GM10248 (cell line): ENCODE measurements at regions of chr17 and their contacts with region 1.

Region 1: DNA sequence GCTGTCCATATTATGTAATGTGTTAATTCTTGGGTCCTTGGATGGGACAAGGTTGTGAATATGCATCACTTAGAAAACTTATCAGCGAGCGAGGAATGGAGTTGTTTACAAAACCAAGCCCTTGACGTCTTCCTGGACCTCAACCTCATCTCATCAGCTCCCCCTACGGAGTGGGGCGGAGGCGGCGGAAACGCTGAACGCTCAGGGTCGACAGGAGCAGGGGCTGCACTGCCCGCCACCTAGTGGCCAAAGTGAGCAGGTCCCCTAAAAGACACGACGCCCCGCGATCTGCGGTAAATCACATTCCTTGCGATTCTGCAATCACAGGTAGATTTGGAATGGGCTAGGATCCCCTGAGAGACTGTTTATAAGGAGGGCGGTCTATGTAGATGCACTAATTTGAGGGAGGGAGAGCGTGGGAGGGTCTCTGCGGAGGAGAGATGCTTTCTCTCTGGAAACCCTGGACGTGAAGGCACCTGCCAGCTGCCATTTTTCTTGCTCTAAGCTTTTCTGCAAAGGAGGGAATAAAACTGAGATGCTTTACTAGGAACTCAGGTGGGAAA is 5.4 kb upstream of the ICAM2 start:
- DNase-seq: peak; percentile 80
- CTCF ChIP-seq: peak; percentile 98

Region 2: GRCh38 chr17:63919311-63919723 is 106.5 kb before region 1 on chr17:
- CTCF ChIA-PET with region 1: interaction called, 160 read pairs
- POLR2A ChIA-PET with region 1: no interaction called
- DNase-seq: peak; percentile 85
- CTCF ChIP-seq: peak; percentile 89

Region 3: DNA sequence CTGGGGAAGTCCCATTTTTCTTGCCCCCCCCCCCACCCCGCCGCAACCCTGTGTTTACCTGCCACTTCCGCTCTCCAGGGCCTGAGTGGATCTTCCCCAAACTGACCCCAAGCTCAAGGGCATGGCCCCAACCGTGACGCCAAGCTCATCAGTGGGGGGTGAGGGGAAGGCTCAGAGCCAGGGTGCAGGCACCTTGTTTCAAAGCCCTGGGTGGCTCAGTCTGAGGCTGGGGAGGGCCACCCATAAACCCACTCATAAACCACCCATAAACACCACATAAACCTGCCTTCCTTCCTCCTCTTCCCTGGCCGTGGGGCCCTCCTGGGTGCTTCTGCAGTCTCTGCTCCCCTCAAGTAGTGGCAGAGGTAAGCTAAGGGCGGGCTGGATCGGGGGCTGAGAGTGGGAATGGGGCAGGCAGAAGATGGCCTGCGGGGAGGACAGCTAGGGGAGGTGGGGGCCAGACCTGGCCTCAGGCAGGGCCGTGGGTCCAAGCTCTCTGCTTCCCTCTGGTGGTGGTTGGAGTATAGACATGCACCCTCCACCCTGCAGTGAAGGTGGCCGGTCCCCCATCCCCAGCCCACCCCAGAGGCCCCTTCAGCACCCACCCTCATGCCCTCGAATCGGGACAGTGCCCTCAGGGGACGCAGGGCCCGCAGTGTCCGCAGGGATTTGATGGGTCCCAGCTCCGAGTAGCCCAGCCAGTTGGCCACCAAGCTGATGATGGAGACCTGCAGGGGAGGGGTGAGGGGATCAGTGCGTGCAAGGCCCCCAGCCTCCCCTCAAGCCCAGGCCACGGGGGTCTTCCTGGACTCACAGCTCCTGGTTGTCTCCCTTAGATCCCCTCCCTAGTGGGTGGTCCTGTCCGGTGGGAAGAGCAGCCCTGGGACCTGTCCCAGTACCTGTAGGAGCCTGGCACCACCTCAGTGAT is 79.1 kb before region 1 on chr17:
- CTCF ChIA-PET with region 1: interaction called, 22 read pairs
- POLR2A ChIA-PET with region 1: no interaction called
- DNase-seq: peak; percentile 90
- CTCF ChIP-seq: peak; percentile 79

Region 4: DNA sequence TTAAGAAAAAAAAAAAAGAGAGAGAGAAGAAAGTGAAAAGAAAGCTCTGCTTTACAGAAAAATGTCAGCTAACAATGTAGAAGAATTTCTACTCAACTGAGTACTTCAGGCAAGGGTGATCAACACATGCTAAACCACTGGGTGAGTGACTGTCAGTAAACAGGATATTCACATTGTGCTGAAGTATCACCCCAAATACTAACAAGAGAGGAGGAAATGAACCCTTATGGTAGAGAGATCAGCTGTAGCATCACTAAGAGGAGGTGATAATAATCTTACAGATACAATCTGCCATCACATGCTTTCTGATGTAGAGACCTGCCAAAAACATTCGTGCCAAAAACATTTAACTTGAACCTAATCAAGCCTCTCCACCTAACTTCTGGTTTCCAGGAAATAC is 25.3 kb after region 1 on chr17:
- CTCF ChIA-PET with region 1: interaction called, 169 read pairs
- POLR2A ChIA-PET with region 1: no interaction called
- DNase-seq: no peak
- CTCF ChIP-seq: no peak

Region 5: GRCh38 chr17:64073771-64074703 is 48.2 kb after region 1 on chr17:
- CTCF ChIA-PET with region 1: interaction called, 27 read pairs
- POLR2A ChIA-PET with region 1: no interaction called
- DNase-seq: peak; percentile 71
- CTCF ChIP-seq: no peak

Region 6: DNA sequence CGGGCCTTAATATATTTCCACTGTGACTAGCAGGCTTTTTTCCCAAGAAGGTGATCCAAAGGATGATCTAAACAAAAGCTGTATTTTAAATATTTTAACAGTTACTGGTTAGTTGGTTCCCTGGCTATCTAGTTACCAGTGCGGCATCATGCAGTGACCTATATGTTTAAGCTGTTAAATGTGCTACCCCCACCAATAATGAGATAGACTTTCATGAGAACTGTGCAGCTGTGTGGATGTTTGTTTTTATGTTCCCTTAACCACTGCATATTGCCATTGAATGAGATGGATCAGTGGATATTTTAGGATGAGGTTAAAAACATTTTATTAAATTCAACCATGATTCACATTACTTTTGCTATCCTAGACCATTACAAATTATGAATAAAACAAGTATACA is 87.2 kb after region 1 on chr17:
- CTCF ChIA-PET with region 1: interaction called, 515 read pairs
- POLR2A ChIA-PET with region 1: no interaction called
- DNase-seq: no peak
- CTCF ChIP-seq: no peak

Region 7: GRCh38 chr17:64145757-64146417 is 120.1 kb after region 1 on chr17:
- CTCF ChIA-PET with region 1: interaction called, 25 read pairs
- POLR2A ChIA-PET with region 1: interaction called, 11 read pairs
- DNase-seq: peak; percentile 97
- CTCF ChIP-seq: no peak